Tibial artery (tissue), 4 donors: ENCODE measurements at regions of chr9 and their contacts with region 1.

Region 1: DNA sequence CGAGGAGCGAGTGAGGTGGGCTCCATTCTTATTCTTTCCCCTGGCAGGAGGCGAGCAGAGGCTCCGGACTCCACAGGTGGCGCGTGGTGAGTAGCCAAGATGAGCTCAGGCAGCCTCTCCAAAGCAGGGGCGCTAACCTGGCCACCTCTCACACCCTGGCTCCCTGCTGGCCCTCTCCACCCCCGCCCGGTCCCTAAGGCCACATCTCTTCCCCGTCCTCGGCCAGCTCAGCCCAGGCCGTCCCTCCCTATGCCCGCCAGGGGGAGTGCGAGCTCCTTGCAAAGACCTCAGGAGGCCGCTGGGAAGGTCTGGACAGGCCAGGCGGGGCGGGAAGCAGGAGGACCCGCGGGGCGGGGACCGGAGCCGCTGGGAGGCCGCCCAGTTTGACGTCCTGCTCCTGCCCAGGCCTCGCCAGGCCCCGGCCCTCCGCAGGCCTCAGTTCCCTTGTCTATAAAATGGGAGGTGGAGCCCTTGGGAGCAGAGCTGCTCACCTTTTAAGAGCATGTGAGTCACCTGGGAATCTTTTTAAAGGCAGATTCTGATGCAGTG is 46.3 kb upstream of the GGTA1 start:
- DNase-seq: peak; percentile 97
- H3K4me3 ChIP-seq: peak overlapping the region; percentile 22 to 36
- H3K27ac ChIP-seq: no peak overlapping the region
- H3K4me1 ChIP-seq: peaks cover 0 to 22% (median 14%) of the 10 kb centered on the region in 4 donors
- H3K27me3 ChIP-seq: peaks cover 0 to 3% of the 10 kb centered on the region in 2 donors
- CTCF ChIP-seq: peak; percentile 95 to 97

Region 2: GRCh38 chr9:121510766-121511550 is 35.0 kb before region 1 on chr9:
- intact Hi-C with region 1: no loop called
- DNase-seq: peak in 1 of 2 donors; percentile 68
- H3K4me3 ChIP-seq: no peak overlapping the region
- H3K27ac ChIP-seq: peak overlapping the region; percentile 33 to 71
- H3K4me1 ChIP-seq: peaks cover 0 to 23% (median 13%) of the 10 kb centered on the region in 4 donors
- H3K27me3 ChIP-seq: no peaks in the 10 kb centered on the region
- CTCF ChIP-seq: no peak

Region 3: DNA sequence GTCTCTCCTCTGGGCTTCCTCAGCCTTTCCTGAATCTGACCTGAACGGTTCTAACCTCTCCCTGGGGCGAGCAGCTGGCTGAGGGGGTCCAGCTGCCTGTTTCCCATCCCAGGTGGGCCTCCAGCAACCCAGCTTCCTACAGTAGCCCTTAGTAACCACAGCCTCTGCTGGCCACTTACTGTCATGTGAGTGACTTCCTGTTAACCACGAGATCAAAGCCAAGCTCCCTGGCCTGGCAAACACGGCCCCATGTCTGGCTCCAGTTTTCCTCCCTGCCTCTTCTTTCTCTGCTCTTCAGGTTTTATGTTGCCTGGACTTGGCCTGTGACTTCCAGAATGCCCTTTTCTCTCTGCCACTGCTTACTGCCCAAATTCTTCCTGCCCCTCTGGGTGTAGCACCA is 58.3 kb after region 1 on chr9:
- intact Hi-C with region 1: loop called (anchors 5 kb)
- DNase-seq: peak in 1 of 2 donors; percentile 54
- H3K4me3 ChIP-seq: no peak overlapping the region
- H3K27ac ChIP-seq: no peak overlapping the region
- H3K4me1 ChIP-seq: peaks cover 0 to 63% (median 51%) of the 10 kb centered on the region in 4 donors
- H3K27me3 ChIP-seq: no peaks in the 10 kb centered on the region
- CTCF ChIP-seq: no peak

Region 4: DNA sequence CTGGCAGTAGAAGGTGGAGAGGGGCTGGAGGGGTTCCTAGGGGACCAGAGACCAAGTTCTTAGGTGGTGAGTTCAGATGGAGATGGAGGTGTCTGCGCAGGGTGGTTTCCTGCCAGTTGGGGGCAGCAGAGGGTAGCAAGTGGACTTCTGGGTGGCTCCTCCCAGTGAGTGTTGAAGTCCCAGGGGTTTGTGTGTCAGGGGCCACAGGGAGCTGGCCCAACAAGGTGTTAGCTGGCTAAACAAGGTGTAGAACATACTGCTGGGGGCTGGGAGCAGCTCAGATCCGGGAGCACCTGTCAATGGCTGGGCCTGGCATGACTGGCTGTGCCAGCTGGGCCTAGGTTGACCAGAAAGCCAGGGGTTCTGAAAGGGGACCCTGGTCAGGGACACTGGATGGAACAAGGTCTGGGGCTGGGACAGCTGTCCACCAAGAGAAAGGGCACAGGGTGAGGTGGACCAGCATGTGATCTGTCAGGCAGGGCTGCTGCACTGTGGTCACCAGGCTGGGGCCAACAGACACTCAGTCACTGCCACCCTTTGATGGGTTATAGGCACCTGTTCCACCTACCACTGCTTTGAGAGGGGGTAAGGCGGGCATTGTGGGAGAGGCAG is 141.1 kb after region 1 on chr9:
- intact Hi-C with region 1: loop called (anchors 5 kb)
- DNase-seq: peak; percentile 74 to 87
- H3K4me3 ChIP-seq: no peak overlapping the region
- H3K27ac ChIP-seq: peak overlapping the region in 1 of 2 donors; percentile 9
- H3K4me1 ChIP-seq: peaks cover 0 to 13% (median 7%) of the 10 kb centered on the region in 4 donors
- H3K27me3 ChIP-seq: no peaks in the 10 kb centered on the region
- CTCF ChIP-seq: peak; percentile 82 to 91

Region 5: DNA sequence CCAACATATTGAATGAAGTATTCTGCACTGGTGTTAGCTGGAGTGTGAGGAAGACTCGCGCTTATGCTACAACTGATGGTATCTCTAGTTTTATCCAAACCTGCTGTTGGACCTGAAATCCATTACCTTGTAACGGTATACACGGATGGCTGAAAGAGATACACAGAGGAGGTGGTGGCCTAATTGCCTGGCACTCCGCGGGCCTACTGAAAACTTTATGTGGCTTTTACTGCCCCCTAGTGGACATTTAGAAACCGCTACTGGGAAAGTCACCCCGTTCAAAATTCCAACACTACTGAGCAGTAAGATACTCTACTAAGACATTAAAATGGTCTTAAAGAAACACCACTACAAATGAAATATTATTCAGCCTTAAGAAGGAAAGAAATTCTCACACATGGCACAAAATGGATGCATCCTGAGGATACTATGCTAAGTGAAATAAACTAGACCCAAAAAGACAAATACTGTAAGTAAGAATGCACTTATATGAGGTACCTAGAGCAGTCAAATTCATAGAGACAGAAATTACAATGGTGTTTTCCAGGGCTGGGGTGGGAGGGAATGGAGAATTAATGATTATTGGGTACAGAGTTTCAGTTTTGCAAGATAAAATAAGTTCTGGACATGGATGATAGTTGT is 446.7 kb after region 1 on chr9:
- intact Hi-C with region 1: loop called (anchors 5 kb)
- DNase-seq: peak in 1 of 2 donors; percentile 53
- H3K4me3 ChIP-seq: no peak overlapping the region
- H3K27ac ChIP-seq: no peak overlapping the region
- H3K4me1 ChIP-seq: peaks cover 0 to 5% (median 2%) of the 10 kb centered on the region in 4 donors
- H3K27me3 ChIP-seq: no peaks in the 10 kb centered on the region
- CTCF ChIP-seq: peak; percentile 79 to 85